ENCODE measurements at regions of chr1 and their contacts with region 1.

Region 1: DNA sequence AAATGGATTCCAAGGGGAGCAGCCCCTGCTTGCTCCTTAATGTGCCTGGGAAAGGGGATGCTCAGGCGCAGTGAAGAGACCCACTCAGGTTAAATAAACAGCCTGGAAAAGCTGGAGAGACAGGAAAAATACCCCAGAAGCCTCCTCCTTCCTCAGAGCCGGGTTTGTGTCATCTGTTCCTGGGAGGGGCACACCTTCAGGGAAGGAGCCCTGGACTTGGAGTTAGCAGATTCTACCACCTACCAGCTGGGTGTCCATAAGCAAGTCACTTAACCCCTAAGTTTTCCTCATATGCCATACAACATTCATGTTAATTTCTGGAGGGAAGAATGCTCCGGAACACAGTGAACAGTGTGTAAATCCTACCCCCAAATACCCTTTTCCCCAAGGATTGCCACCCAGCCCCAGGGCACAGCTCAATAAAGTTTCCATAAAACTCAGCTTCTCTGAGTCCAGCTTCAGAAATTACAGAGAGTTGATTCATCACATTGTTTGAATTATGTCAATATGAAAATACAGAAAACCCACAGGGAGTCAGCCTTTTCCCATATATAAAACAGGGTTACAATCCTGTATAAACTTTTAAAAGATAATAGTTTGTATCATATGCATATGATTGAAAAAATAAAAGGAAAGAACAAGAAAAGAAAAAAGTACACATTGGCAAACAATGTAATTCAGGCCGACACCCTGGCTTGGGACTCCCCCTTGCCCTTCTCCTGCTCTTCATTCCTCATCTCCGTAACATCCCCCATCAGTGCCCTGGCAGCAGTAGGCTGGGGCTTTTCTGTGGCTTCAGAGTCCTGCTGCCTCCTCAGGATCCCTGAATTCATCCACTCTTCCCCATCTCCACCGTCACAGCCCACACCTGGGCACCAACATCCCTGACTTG is 291.8 kb upstream of the USP24 start:
- DNase-seq: peak; percentile 63
- ATAC-seq: peak; percentile 51
- H3K4me3 ChIP-seq: no peak overlapping the region
- H3K27ac ChIP-seq: peak overlapping the region; percentile 89
- H3K4me1 ChIP-seq: peaks cover 30% of the 10 kb centered on the region
- H3K27me3 ChIP-seq: no peaks in the 10 kb centered on the region
- CTCF ChIP-seq: peak; percentile 31; the same call in 1 of the 2 replicates
- POLR2A ChIP-seq: no peak
- RAD21 ChIP-seq: peak; percentile 37

Region 2: DNA sequence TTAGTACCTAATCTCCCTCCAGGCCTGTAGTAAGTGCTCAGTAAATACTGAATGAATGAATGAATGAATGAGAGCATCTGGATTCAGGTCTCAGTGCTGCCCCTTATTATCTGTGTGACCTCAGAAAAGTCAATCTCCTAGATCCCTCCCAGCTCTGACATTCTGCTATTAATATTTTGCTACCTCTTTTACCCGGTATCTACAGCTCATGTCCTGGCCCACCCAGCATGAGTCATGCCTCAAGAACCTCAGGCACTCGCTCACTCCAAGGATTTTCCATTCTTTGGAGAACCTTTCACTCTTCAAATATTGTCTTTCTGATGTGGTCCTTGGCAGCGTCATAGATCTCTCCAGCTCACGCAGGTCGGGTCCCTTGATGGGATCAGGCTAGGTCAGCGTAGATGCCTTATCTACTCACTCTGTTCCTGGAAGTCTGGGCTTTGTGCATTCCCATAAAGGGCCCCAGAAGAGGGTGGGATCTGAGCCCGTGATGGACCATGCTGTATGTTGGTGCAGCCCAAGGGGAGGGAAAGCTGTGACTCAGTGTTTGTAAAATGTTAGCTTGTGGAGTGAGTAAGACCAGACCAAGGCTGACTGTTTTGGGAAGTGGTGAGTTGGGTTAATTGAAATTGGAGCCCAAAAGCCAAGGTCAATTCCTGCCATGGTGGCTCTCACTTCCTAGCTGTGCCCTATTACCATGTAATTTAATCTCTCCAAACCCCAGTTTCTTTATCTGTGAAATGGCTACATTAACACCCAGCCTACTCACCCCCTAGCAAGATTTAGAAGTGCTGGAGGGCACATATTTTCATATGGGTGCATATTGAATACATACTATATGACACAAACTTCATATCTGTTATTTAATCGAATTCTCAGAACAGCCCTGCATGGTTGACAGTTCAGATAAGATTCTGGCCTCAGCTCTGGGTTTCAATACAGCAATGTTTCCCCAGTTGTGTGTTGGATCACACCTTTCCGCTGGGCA is 77.7 kb before region 1 on chr1:
- CTCF ChIA-PET with region 1: no interaction called
- POLR2A ChIA-PET with region 1: no interaction called
- dilution Hi-C with region 1: no loop called
- in situ Hi-C with region 1: no loop called
- intact Hi-C with region 1: loop called (anchors 1 kb)
- DNase-seq: peak; percentile 100
- ATAC-seq: peak; percentile 85
- H3K4me3 ChIP-seq: no peak overlapping the region
- H3K27ac ChIP-seq: peak overlapping the region; percentile 80
- H3K4me1 ChIP-seq: peaks cover 38% of the 10 kb centered on the region
- H3K27me3 ChIP-seq: no peaks in the 10 kb centered on the region
- CTCF ChIP-seq: no peak
- POLR2A ChIP-seq: 0 out of 2 replicates have a peak, but pooled peaks have one; percentile 15
- RAD21 ChIP-seq: peak; percentile 29; the same call in 1 of the 2 replicates

Region 3: GRCh38 chr1:55490547-55490946 is 16.4 kb before region 1 on chr1:
- CTCF ChIA-PET with region 1: no interaction called
- POLR2A ChIA-PET with region 1: no interaction called
- dilution Hi-C with region 1: no loop called
- in situ Hi-C with region 1: no loop called
- intact Hi-C with region 1: no loop called
- DNase-seq: peak; percentile 76
- ATAC-seq: peak; percentile 90
- H3K4me3 ChIP-seq: no peak overlapping the region
- H3K27ac ChIP-seq: peak overlapping the region; percentile 48; the same call in 1 of the 2 replicates
- H3K4me1 ChIP-seq: peaks cover 2% of the 10 kb centered on the region
- H3K27me3 ChIP-seq: no peaks in the 10 kb centered on the region
- CTCF ChIP-seq: no peak
- POLR2A ChIP-seq: no peak
- RAD21 ChIP-seq: no peak

Region 4: DNA sequence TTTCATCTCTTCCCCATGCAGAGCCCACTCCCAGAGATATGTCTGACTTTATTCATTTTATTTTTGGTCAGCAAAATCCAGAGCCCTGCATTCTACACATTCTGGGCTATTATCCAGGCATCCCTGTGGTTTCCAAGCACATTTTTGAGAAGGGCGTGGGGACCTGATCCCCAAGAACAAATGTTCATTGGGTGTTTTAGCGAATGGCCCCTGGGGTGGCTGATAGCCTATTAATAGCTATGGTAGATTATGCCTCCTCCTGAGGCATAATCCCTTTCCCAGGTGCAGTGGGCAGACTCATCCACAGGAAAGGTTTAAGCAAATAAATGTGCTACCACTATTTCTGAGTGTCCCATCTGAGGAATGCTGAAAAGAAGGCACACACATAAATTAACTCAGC is 220.1 kb after region 1 on chr1:
- CTCF ChIA-PET with region 1: no interaction called
- POLR2A ChIA-PET with region 1: no interaction called
- dilution Hi-C with region 1: no loop called
- in situ Hi-C with region 1: no loop called
- intact Hi-C with region 1: no loop called
- DNase-seq: peak; percentile 62
- ATAC-seq: peak; percentile 32
- H3K4me3 ChIP-seq: no peak overlapping the region
- H3K27ac ChIP-seq: peak overlapping the region; percentile 49; the same call in 1 of the 2 replicates
- H3K4me1 ChIP-seq: peaks cover 11% of the 10 kb centered on the region
- H3K27me3 ChIP-seq: no peaks in the 10 kb centered on the region
- CTCF ChIP-seq: no peak
- POLR2A ChIP-seq: no peak
- RAD21 ChIP-seq: no peak

Region 5: DNA sequence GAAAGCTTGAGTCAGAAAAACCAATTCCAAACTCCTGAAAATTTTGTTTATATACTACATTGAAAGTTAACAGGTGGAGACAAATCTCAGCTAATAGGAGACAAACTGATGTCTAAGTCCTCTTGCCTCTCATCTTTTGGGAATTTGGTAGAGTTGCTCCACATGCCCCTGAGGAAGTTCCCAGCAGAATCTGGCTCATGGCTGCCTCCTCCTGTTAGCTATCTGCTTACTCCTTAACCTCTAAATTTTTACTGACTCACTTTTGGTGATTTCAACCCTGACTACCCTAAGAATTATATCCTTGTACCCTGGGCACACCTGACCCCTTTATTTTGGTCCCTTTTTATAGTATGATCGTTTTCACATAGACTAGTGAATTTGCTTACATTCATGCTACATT is 342.0 kb after region 1 on chr1:
- CTCF ChIA-PET with region 1: no interaction called
- POLR2A ChIA-PET with region 1: no interaction called
- dilution Hi-C with region 1: no loop called
- in situ Hi-C with region 1: no loop called
- intact Hi-C with region 1: loop called (anchors 10 kb)
- DNase-seq: peak; percentile 73
- ATAC-seq: peak; percentile 66
- H3K4me3 ChIP-seq: no peak overlapping the region
- H3K27ac ChIP-seq: no peak overlapping the region
- H3K4me1 ChIP-seq: no peaks in the 10 kb centered on the region
- H3K27me3 ChIP-seq: no peaks in the 10 kb centered on the region
- CTCF ChIP-seq: peak; percentile 56
- POLR2A ChIP-seq: no peak
- RAD21 ChIP-seq: peak; percentile 75

Region 6: GRCh38 chr1:56584910-56585528 is 1078.1 kb after region 1 on chr1:
- CTCF ChIA-PET with region 1: interaction called, 3 read pairs
- POLR2A ChIA-PET with region 1: no interaction called
- dilution Hi-C with region 1: no loop called
- in situ Hi-C with region 1: no loop called
- intact Hi-C with region 1: loop called (anchors 2 kb)
- DNase-seq: peak; percentile 77
- ATAC-seq: peak; percentile 89
- H3K4me3 ChIP-seq: no peak overlapping the region
- H3K27ac ChIP-seq: no peak overlapping the region
- H3K4me1 ChIP-seq: no peaks in the 10 kb centered on the region
- H3K27me3 ChIP-seq: no peaks in the 10 kb centered on the region
- CTCF ChIP-seq: peak; percentile 94
- POLR2A ChIP-seq: no peak
- RAD21 ChIP-seq: peak; percentile 93